OCI-LY7 (cell line): ENCODE measurements at regions of chr3 and their contacts with region 1.

Region 1: GRCh38 chr3:31908391-31909097 is 72.5 kb downstream of the OSBPL10 start:
- DNase-seq: peak; percentile 74
- H3K4me3 ChIP-seq: peak overlapping the region; percentile 9
- H3K27ac ChIP-seq: peak overlapping the region; percentile 63
- H3K4me1 ChIP-seq: peaks cover 98% of the 10 kb centered on the region
- CTCF ChIP-seq: peak; percentile 59; the same call in 1 of the 2 replicates

Region 2: GRCh38 chr3:31882431-31882830 is 26.1 kb before region 1 on chr3:
- CTCF ChIA-PET with region 1: no interaction called
- POLR2A ChIA-PET with region 1: interaction called, 14 read pairs
- intact Hi-C with region 1: no loop called
- DNase-seq: no peak
- H3K4me3 ChIP-seq: no peak overlapping the region
- H3K27ac ChIP-seq: peak overlapping the region; percentile 90
- H3K4me1 ChIP-seq: peaks cover 100% of the 10 kb centered on the region
- CTCF ChIP-seq: no peak

Region 3: GRCh38 chr3:32018757-32019564 is 110.4 kb after region 1 on chr3:
- CTCF ChIA-PET with region 1: no interaction called
- POLR2A ChIA-PET with region 1: no interaction called
- intact Hi-C with region 1: no loop called
- DNase-seq: peak; percentile 72
- H3K4me3 ChIP-seq: no peak overlapping the region
- H3K27ac ChIP-seq: no peak overlapping the region
- H3K4me1 ChIP-seq: peaks cover 26% of the 10 kb centered on the region
- CTCF ChIP-seq: peak; percentile 97